Dendritic cell treated with granulocyte-macrophage colony-stimulating factor and Interleukin-4, amounts not matched to agents 40 ng/mL and 50 ng/mL, for 4 days (primary cell): ENCODE measurements at regions of chr18 and their contacts with region 1.

Region 1: GRCh38 chr18:2906704-2907549 is 60.1 kb downstream of the EMILIN2 start:
- H3K4me3 Mint-ChIP-seq: peak overlapping the region; percentile 81
- H3K27ac Mint-ChIP-seq: peak overlapping the region; percentile 90
- H3K4me1 Mint-ChIP-seq: peaks cover 33% of the 10 kb centered on the region
- H3K27me3 Mint-ChIP-seq: no peaks in the 10 kb centered on the region

Region 2: GRCh38 chr18:2846636-2847364 is 60.1 kb before region 1 on chr18 and contains the start of gene EMILIN2:
- intact Hi-C with region 1: loop called (anchors 5 kb)
- H3K4me3 Mint-ChIP-seq: peak within 1 kb of the TSS; percentile 97
- H3K27ac Mint-ChIP-seq: no peak within 1 kb of the TSS
- H3K4me1 Mint-ChIP-seq: peaks cover 76% of the 10 kb centered on the region
- H3K27me3 Mint-ChIP-seq: no peaks in the 10 kb centered on the region